ENCODE measurements at regions of chr14 and their contacts with region 1.

Region 1: DNA sequence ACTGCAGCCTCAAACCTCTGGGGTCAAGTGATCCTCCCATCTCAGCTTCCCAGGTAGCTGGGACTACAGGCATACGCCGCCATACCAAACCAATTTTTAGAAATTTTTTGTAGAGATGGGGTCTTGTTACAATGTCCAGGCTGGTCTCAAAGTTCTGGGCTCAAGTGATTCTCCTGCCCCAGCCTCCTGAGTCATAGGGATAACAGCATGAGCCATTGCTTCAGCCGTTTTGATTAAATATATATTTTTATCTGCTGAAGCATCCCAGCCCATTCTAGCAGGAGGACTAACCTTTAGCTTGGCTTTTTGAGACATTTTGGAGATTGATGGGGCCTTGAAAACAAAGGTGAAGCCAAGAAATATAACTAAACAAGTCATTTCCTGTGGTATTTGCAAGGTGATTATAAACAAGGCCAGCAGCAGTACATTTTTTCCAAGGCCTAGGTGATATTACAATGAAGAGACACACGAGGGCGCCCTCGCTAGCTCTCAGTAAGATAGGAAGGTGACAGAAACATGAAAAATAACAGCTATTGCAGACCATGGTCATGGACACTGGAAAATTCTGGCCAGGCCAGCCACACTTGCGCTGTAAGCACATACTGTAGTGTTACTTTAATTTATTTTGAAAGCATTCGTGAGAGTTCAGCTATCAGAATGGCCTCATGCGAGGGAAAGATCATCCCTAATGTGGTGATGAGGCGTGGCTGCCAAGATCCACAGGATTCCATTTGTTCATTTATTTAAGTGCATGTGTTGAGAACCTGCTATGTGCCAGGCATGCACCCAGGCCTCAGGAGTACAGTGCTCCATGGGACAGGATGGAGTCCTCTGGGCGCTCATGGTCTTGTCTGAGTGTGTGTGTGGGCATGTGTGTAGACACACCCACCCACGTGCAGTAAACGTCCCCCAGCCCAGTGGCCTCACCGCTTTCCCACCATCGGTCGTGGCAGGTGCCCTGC is 63.5 kb downstream of the DGLUCY start:
- DNase-seq: peak; percentile 30 to 80 (median 68)
- ATAC-seq: peak; percentile 91
- H3K4me3 ChIP-seq: no peak overlapping the region
- H3K4me3 Mint-ChIP-seq: peak overlapping the region in 1 of 10 donors; percentile 8
- H3K27ac ChIP-seq: peak overlapping the region; percentile 44
- H3K27ac Mint-ChIP-seq: peak overlapping the region in 8 of 9 donors; percentile 12 to 85 (median 68)
- H3K4me1 ChIP-seq: peaks cover 0 to 8% of the 10 kb centered on the region in 2 donors
- H3K4me1 Mint-ChIP-seq: peaks cover 6 to 29% (median 13%) of the 10 kb centered on the region in 7 donors
- H3K27me3 ChIP-seq: no peaks in the 10 kb centered on the region
- H3K27me3 Mint-ChIP-seq: no peaks in the 10 kb centered on the region

Region 2: GRCh38 chr14:90985601-90986242 is 191.6 kb before region 1 on chr14:
- CTCF ChIA-PET with region 1: interaction called, 4 read pairs
- POLR2A ChIA-PET with region 1: no interaction called
- intact Hi-C with region 1: loop called in 1 of 2 experiments (anchors 1 kb)
- DNase-seq: peak in 1 of 9 donors; percentile 2
- ATAC-seq: no peak
- H3K4me3 ChIP-seq: no peak overlapping the region
- H3K4me3 Mint-ChIP-seq: no peak overlapping the region
- H3K27ac ChIP-seq: no peak overlapping the region
- H3K27ac Mint-ChIP-seq: no peak overlapping the region
- H3K4me1 ChIP-seq: no peaks in the 10 kb centered on the region
- H3K4me1 Mint-ChIP-seq: peaks cover 0 to 38% (median 9%) of the 10 kb centered on the region in 7 donors
- H3K27me3 ChIP-seq: no peaks in the 10 kb centered on the region
- H3K27me3 Mint-ChIP-seq: no peaks in the 10 kb centered on the region

Region 3: DNA sequence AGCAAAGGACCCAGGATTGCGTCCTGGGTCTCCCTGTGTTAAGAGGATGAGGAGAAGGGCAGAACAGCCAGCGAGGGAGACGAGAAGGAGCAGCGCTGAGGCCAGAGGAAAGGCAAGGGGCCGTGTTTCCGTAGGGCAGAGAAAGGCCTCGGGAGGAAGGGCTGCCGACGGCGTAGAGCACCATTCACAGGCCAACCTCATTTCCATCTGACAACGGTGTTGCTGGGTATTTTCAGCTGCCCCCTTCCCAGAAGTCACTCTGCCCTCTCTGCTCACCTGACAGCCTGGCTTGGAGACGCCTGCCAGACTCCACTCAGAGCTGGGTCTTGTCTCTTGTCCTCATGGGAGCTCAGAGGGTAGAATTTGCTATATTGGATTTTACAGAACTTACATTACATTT is 15.7 kb after region 1 on chr14:
- CTCF ChIA-PET with region 1: interaction called, 5 read pairs
- POLR2A ChIA-PET with region 1: no interaction called
- intact Hi-C with region 1: loop called in 1 of 2 experiments (anchors 2 kb)
- DNase-seq: no peak
- ATAC-seq: no peak
- H3K4me3 ChIP-seq: no peak overlapping the region
- H3K4me3 Mint-ChIP-seq: peak overlapping the region in 2 of 10 donors; percentile 12 to 23
- H3K27ac ChIP-seq: no peak overlapping the region
- H3K27ac Mint-ChIP-seq: peak overlapping the region in 1 of 9 donors; percentile 13
- H3K4me1 ChIP-seq: peaks cover 8 to 9% of the 10 kb centered on the region in 2 donors
- H3K4me1 Mint-ChIP-seq: peaks cover 12 to 51% (median 22%) of the 10 kb centered on the region in 7 donors
- H3K27me3 ChIP-seq: no peaks in the 10 kb centered on the region
- H3K27me3 Mint-ChIP-seq: no peaks in the 10 kb centered on the region

Region 4: DNA sequence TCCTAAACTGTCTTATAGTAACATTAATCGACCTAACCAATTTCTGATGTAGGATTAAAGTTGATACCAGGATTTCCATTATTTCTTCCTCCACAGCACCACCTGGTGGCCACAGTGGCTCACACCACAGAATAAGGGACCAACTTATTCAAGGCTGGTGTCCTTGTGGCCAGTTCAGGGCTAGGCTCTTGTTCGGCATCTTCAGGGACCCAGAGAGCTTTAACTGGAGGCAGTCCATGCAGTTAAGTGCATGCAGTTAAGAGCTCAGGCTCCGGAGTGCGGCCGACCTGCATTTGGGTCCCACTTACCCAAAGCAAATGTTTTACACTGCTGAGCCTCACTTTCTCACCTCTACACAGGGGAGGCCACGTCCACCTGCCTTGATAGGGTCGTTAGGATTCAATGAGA is 109.2 kb after region 1 on chr14:
- CTCF ChIA-PET with region 1: interaction called, 204 read pairs
- POLR2A ChIA-PET with region 1: interaction called, 21 read pairs
- intact Hi-C with region 1: loop called (anchors 1 kb)
- DNase-seq: peak; percentile 55 to 77 (median 69)
- ATAC-seq: peak; percentile 89
- H3K4me3 ChIP-seq: no peak overlapping the region
- H3K4me3 Mint-ChIP-seq: peak overlapping the region in 1 of 10 donors; percentile 35
- H3K27ac ChIP-seq: no peak overlapping the region
- H3K27ac Mint-ChIP-seq: peak overlapping the region; percentile 2 to 86 (median 63)
- H3K4me1 ChIP-seq: no peaks in the 10 kb centered on the region
- H3K4me1 Mint-ChIP-seq: peaks cover 11 to 25% (median 17%) of the 10 kb centered on the region in 7 donors
- H3K27me3 ChIP-seq: no peaks in the 10 kb centered on the region
- H3K27me3 Mint-ChIP-seq: no peaks in the 10 kb centered on the region